Gastrocnemius medialis (tissue), 4 donors: ENCODE measurements at regions of chr11 and their contacts with region 1.

Region 1: GRCh38 chr11:74592441-74593362 is at the start of gene POLD3:
- DNase-seq: peak; percentile 85 to 87
- ATAC-seq: peak; percentile 96 to 99
- H3K4me3 ChIP-seq: peak within 1 kb of the TSS; percentile 76 to 99 (median 88)
- H3K27ac ChIP-seq: peak within 1 kb of the TSS; percentile 47 to 77 (median 74)
- H3K4me1 ChIP-seq: peaks cover 10 to 12% of the 10 kb centered on the region in 2 donors
- H3K27me3 ChIP-seq: no peaks in the 10 kb centered on the region
- CTCF ChIP-seq: no peak
- POLR2A ChIP-seq: no peak
- total RNA-seq, gene POLD3: 4.6 to 6.4 (median 5.8) TPM

Region 2: DNA sequence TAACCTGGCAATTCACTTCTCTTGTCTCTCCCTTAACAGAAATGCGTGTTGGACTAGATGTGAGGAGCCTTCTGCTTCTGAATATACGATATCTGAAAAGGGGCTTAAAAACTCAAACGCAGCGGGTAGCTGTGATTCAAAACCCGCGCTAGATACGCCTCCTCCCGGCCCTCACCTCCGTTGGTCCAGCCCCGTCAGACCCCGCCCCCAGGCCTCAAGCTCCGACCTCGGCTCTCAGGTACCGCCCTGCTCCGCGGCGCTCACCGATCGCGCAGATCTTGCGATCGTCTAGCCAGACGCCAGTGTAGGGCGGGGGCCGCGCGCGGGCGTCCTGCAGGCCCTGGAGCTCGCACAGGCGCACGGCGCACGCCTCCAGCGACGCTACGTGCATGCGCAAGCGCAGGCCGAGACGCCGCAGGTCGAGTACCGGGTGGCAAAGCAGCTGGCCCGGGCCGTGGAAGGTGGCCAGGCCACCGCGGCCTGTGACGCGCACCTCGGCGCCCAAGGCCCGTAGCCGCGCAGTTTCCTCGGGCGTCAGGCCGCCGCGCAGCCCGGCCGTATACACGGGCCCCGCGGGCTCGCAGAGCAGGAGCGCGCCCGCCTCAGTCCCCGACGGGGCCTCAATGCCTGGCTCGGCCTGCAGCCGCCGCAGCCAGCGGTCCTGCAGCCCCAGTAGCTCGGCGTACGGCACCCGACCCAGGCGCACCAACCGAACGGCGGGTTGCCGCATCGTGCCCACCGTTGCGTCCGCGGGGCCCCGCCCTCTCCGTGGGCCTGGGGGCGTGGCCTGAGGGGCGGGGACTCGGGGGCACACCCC is 99.5 kb before region 1 on chr11 and contains the start of gene LIPT2:
- in situ Hi-C with region 1: no loop called
- intact Hi-C with region 1: loop called (anchors 5 kb)
- DNase-seq: peak; percentile 94 to 97
- ATAC-seq: peak; percentile 90 to 92
- H3K4me3 ChIP-seq: peak within 1 kb of the TSS; percentile 66 to 96 (median 78)
- H3K27ac ChIP-seq: peak within 1 kb of the TSS; percentile 86 to 100 (median 96)
- H3K4me1 ChIP-seq: peaks cover 20% of the 10 kb centered on the region in 2 donors
- H3K27me3 ChIP-seq: no peaks in the 10 kb centered on the region
- CTCF ChIP-seq: no peak
- POLR2A ChIP-seq: peak; percentile 76 to 87
- total RNA-seq, gene LIPT2: 3.5 to 11.2 (median 8.3) TPM

Region 3: DNA sequence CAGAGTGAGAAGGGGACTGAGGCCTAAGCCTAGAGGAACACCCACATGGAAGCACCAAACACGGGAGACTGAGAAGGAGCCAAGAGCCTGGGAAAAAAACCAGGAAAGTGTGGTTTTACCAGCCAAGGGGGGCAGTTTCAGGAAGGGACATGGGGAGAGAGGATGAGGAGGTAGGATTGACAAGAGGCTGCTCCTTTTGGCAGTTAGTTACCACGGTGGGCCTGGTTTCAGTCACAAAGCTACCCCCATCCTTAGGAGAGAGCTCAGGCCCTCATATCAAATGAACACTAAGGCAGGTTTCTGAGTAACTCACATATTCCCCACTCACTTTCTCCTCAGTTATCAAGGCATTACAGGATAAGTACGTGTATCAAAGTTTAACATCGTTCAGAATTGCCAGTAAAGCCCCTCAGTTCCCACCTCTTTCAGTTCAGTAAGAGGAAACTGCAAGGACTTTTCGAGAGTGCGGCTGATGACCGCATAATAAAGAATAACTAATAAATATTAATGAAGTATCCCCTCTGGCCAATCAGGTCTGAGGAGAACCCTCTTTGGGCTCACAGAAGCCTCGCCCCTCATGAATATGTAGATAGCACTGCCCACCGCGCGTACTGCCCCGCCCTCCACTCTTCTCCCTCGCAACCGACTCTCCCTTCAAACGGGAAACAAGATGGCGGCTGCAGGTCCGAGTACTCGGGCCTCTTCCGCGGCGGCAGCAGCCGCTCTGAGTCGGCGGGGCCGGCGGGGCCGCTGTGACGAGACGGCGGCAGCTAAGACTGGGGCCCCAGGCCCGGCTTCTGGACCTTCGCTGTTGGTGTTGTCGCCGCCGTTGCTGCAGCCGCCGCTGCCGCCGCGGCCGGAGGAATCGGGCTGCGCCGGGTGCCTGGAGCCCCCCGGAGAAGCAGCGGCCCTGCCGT is 155.8 kb after region 1 on chr11 and contains the start of gene RNF169:
- in situ Hi-C with region 1: no loop called
- intact Hi-C with region 1: loop called (anchors 5 kb)
- DNase-seq: peak; percentile 93 to 94
- ATAC-seq: peak; percentile 99
- H3K4me3 ChIP-seq: peak within 1 kb of the TSS; percentile 65 to 84 (median 72)
- H3K27ac ChIP-seq: peak within 1 kb of the TSS; percentile 82 to 93 (median 87)
- H3K4me1 ChIP-seq: peaks cover 14 to 23% of the 10 kb centered on the region in 2 donors
- H3K27me3 ChIP-seq: no peaks in the 10 kb centered on the region
- CTCF ChIP-seq: no peak
- POLR2A ChIP-seq: peak; percentile 51 to 69
- total RNA-seq, gene RNF169: 17.1 to 25.2 (median 21.0) TPM